Cardiac septum (tissue), 1 donor: ENCODE measurements at regions of chr16 and their contacts with region 1.

Region 1: DNA sequence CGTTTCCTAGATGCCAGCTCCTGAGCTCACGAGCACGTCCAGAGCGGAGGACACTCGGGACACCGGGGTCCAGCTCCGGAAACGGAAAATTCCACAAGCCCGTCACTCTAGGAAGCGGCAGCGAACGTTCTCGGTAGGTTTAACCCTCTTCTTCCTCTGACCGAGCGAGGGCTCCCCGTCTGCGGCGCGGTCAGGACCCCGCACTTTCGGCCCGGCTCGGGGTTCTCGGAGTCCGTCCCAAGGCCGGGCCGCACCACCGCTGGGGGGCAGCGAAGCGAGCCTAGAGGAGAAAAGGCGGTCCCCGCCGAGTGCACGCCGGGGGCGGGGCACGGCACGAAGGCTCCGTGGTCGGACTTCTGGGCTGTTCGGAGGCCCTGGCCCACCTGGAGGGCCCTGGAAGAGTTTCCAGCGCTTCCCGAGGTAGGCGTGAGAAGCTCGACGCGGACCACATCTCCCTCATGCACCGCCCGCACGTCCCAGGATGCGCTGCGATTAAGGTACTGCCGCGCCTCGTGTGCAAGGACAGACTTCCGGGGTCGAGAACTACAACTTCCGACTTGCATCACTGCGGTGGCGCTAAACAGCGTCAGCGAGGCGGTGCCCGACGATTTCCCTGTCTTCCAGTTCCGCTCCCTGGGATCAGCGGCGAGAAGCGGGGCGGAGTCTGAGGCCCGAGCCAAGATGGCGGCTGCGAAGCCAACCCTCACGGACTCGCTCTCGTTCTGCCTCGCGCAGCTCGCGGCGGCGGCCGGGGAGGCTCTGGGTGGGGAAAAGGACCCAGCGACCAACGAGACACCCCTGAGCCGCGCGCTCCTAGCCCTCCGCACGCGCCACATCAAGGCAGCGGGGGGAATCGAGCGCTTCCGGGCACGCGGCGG is at the start of gene ARMC5:
- DNase-seq: peak; percentile 98
- total RNA-seq, gene ARMC5: 6.2 TPM

Region 2: GRCh38 chr16:30957456-30958174 is 501.5 kb before region 1 on chr16 and contains the start of gene SETD1A:
- intact Hi-C with region 1: loop called (anchors 10 kb)
- DNase-seq: peak; percentile 98
- total RNA-seq, gene SETD1A: 9.6 TPM

Region 3: DNA sequence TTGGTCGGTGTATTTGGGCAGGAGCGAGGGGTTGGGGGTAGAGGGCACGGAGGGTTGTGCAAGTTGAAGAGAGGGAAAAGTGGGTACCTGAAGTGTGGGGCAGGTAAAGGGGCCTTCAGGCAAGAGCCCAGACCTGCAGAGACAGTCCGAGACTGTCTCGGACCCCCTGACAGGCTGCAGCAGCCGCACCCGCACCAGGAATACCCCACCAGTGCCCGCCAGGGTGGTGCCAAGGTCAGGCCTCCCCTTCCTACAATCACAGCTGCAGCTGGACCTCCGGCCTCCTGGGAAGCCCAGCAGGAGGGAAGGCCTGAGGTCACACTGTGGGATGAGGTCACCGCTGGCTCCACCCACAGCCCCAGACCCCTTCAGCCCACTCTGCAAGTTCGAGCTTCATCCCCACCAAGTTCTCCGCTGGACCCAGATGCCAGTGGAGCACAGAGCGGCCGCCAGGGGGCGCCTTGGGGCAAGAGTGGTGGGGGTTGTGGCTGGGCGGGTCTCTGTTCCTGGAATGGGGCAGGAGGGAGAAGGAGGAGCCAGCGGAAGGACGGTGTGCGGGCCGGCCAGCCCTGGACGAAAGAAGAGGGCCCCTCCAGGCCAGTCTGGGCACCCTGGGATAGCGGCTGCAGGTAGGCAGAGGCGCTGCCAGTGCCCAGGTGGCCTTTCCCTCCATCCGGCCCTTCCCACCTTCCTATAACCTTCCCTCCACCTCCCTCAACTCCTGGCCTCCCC is 474.2 kb before region 1 on chr16 and contains the start of gene HSD3B7:
- intact Hi-C with region 1: loop called (anchors 5 kb)
- DNase-seq: peak; percentile 95
- total RNA-seq, gene HSD3B7: 5.4 TPM

Region 4: GRCh38 chr16:31507929-31508705 is 49.0 kb after region 1 on chr16 and contains the start of gene RUSF1:
- intact Hi-C with region 1: loop called (anchors 5 kb)
- DNase-seq: peak; percentile 98
- total RNA-seq, gene RUSF1: 32.6 TPM

Region 5: GRCh38 chr16:31713071-31713944 is 254.2 kb after region 1 on chr16:
- intact Hi-C with region 1: loop called (anchors 5 kb)
- DNase-seq: peak; percentile 94

Region 6: DNA sequence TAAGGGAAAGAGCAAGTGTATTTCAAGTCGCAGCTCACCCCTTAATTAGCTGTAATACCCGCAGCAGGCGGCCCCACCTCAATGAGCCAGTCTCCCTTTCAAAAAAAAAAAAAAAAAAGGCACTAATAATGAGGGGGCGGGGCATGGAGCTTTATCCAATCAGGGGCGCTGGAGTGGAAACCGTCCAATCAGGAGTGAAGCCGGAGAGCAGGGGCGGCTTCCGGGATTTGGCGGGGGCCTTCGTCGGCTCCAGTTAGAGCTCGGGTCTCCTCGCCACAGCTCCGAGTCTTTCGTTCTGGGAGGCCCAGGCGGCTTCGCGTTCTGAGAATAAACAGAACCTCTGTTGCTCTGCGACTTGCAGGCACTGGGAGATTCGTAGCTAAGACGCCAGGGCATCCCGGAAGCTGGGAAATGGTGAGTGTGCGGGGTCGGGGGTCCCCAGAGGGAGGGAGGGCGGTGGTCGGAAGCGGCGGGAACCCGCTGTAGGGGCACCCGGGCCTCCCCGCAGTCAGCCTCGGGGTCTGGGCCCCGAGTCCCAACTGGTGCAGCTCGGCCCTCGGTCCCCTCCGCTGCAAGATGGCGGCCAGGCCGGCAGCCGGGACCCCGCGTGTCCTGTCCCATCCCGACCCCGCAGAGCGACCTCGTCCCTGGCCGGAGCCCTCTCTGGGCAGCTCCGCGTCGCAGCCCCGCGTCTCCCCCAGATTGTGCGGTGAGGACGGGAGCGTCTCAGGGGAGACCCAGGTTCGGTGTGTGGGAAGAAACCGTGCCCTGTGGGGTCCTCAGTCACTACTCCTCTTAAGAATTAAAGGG is 414.7 kb after region 1 on chr16 and contains the start of gene ZNF267:
- intact Hi-C with region 1: loop called (anchors 5 kb)
- DNase-seq: peak; percentile 97
- total RNA-seq, gene ZNF267: 4.2 TPM